ENCODE measurements at regions of chr2 and their contacts with region 1.

Region 1: GRCh38 chr2:171160119-171160955 is at the start of gene TLK1:
- DNase-seq: peak; percentile 66 to 81 (median 74)
- H3K4me3 ChIP-seq: peak within 1 kb of the TSS; percentile 83
- H3K27ac ChIP-seq: peak within 1 kb of the TSS; percentile 98 to 99
- H3K4me1 ChIP-seq: no peaks in the 10 kb centered on the region
- H3K27me3 ChIP-seq: no peaks in the 10 kb centered on the region
- CTCF ChIP-seq: no peak
- EP300 ChIP-seq: no peak
- POLR2A ChIP-seq: peak; percentile 55
- total RNA-seq, gene TLK1: 26.3 to 77.4 (median 62.8) TPM

Region 2: DNA sequence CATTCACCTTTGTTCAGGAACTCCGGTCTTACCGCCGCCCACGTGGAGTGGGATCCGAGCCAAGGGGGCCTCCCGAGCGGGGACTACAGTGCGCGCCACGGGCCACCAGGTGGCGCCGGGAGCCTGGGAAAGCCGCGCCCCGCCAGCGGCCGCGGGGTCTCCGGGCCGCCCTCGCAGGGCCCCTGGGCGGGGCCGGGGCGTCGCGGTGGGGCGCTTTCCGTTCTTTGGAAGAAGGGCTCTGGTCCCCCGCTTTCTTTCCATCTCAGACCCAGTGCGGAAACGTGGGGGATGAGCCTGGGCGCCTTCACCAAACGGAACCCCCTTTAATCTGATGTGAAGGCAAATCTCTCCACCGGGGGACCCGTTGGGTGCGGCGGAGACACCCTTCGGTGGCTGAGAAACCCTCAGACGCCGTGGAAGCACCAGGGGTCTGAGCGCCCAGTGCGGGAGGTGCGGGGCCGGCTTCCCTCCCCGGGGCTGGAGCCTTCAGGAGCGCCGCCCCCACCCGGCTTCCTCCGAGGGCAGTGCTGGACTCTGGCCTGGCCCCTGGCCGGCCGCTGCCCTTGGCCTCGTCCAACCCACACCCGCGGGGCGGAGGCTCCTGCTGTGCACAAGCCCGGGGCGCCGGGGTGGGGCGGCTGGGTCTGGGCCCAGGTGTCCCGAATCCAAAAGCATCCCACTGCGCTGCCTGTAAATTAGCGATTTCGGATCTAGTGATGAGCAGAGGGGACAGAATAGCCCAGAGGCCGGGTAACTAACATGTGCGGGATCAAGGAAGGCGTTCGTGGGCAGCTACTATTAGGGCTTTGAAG is 186.6 kb before region 1 on chr2:
- intact Hi-C with region 1: loop called in 2 of 4 experiments (anchors 5 kb)
- DNase-seq: peak; percentile 83 to 93 (median 90)
- H3K4me3 ChIP-seq: peak overlapping the region; percentile 71
- H3K27ac ChIP-seq: peak overlapping the region; percentile 76 to 77
- H3K4me1 ChIP-seq: peaks cover 2% of the 10 kb centered on the region
- H3K27me3 ChIP-seq: no peaks in the 10 kb centered on the region
- CTCF ChIP-seq: peak; percentile 86 to 98 (median 98)
- EP300 ChIP-seq: no peak
- POLR2A ChIP-seq: no peak

Region 3: DNA sequence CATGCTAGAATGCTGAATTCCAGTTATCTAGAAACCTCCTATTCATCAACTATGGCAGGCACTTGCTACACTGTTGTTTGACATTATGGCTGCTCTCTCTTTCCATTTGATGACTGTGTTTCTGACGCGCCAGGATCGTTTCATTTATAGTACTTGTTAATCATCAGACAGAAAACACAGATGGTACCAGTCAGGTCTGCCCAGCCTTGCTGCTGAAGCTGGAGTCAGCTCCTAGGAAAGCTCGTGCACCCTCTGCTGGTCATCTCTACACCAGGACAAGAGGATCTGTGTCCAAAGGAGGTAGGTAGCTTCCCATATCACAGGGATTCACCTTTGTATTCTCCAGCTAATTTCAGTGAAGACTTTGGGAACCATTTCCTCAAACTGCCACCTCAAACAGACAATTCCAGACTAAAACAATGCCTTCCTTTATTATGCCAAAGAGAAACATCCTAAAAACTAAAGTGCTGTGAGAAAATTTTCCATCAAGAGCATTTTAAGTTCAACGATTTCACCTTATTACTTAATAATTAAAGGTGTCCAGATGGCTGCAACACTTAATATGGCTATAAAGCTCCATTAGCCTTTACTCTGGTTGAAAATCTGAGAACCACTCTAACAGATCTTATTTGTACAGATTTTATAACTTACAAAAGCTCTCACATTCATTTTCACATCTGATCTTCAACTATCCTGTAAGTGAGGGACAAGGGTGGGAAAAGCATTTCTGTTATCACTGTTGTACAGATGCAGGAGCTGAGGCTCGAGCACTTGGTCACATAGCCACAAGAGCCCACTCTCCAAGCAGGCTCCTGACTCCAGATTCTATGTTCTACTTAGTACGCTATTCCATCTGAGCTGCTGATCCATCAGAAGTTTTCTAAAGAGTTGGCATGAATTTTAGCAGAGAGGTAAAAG is 255.9 kb after region 1 on chr2:
- intact Hi-C with region 1: loop called in 2 of 4 experiments (anchors 10 kb)
- DNase-seq: peak; percentile 82 to 90 (median 86)
- H3K4me3 ChIP-seq: no peak overlapping the region
- H3K27ac ChIP-seq: no peak overlapping the region
- H3K4me1 ChIP-seq: peaks cover 3% of the 10 kb centered on the region
- H3K27me3 ChIP-seq: no peaks in the 10 kb centered on the region
- CTCF ChIP-seq: peak; percentile 53 to 78 (median 56)
- EP300 ChIP-seq: no peak
- POLR2A ChIP-seq: no peak

Region 4: GRCh38 chr2:171433763-171434670 is 273.7 kb after region 1 on chr2 and contains the starts of genes DCAF17 and METTL8:
- intact Hi-C with region 1: loop called in 1 of 4 experiments (anchors 10 kb)
- DNase-seq: peak; percentile 93 to 95 (median 94)
- H3K4me3 ChIP-seq: peak within 1 kb of the TSS; percentile 73
- H3K27ac ChIP-seq: peak within 1 kb of the TSS; percentile 92 to 95
- H3K4me1 ChIP-seq: no peaks in the 10 kb centered on the region
- H3K27me3 ChIP-seq: no peaks in the 10 kb centered on the region
- CTCF ChIP-seq: peak in 2 of 3 donors; percentile 1 to 7
- EP300 ChIP-seq: no peak
- POLR2A ChIP-seq: peak; percentile 35
- total RNA-seq, gene DCAF17: 12.3 to 20.2 (median 17.9) TPM
- total RNA-seq, gene METTL8: 10.8 to 33.0 (median 17.9) TPM

Measured in ovary (tissue), 10 donors.